Transverse colon (tissue), 4 donors: ENCODE measurements at regions of chr7 and their contacts with region 1.

Region 1: GRCh38 chr7:89988074-89988473 is 166.2 kb upstream of the STEAP1 start:
- DNase-seq: no peak
- H3K4me3 ChIP-seq: no peak overlapping the region
- H3K27ac ChIP-seq: no peak overlapping the region
- H3K4me1 ChIP-seq: no peaks in the 10 kb centered on the region
- H3K27me3 ChIP-seq: no peaks in the 10 kb centered on the region
- CTCF ChIP-seq: no peak
- EP300 ChIP-seq: no peak
- POLR2A ChIP-seq: no peak

Region 2: DNA sequence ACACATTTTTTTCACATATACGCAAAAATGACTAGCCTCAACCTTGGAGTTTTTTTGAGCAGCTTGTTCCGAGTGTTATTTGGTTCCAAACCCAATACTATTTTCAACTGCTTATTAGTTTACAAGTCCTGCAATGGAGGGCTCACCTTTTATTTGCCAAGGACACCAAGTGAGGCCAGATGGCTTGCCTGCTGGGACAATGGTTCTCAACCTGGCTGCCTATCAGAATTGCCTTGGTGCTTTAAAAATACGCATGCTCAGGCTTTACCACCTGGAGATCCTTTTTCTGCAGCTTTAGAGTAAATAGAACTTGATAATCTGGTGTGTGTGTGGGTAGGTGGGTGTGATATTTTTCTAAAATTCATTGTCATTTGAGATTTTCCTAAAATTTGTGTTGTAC is 1615.6 kb after region 1 on chr7:
- in situ Hi-C with region 1: no loop called
- intact Hi-C with region 1: loop called (anchors 5 kb)
- DNase-seq: no peak
- H3K4me3 ChIP-seq: no peak overlapping the region
- H3K27ac ChIP-seq: no peak overlapping the region
- H3K4me1 ChIP-seq: no peaks in the 10 kb centered on the region
- H3K27me3 ChIP-seq: no peaks in the 10 kb centered on the region
- CTCF ChIP-seq: no peak
- EP300 ChIP-seq: no peak
- POLR2A ChIP-seq: no peak